ENCODE measurements at regions of chr7 and their contacts with region 1.

Region 1: GRCh38 chr7:91880413-91881241 is at the start of gene MTERF1:
- DNase-seq: peak; percentile 93
- H3K4me3 ChIP-seq: peak within 1 kb of the TSS; percentile 72 to 90
- H3K27ac ChIP-seq: peak within 1 kb of the TSS; percentile 61 to 78
- H3K4me1 ChIP-seq: peaks cover 8 to 9% of the 10 kb centered on the region in 2 experiments
- H3K27me3 ChIP-seq: no peaks in the 10 kb centered on the region
- CTCF ChIP-seq: peak; percentile 100
- EP300 ChIP-seq: no peak
- RAD21 ChIP-seq: peak; percentile 91
- polyA plus RNA-seq, gene MTERF1: 6.1 and 12.0 TPM in 2 replicates

Region 2: DNA sequence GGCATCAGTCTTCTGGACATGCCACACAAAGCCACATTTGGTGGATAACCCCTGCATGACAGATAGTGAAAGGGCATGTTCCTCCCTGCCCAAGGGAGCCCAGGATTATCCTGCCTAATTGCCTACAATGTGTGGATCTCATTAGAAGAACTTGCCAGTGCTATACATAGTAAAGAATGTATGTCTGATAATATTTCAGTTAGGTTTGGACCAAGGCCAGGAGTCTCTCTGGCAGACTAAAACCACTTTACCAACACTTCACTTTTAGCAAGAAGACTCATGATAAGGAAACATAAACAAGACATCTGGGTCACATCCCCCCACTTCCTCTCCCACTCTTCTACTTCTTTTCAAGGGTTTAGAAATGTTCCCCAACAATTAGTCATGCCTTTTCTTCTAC is 196.8 kb before region 1 on chr7:
- CTCF ChIA-PET with region 1: no interaction called
- POLR2A ChIA-PET with region 1: no interaction called
- DNase-seq: peak; percentile 16
- H3K4me3 ChIP-seq: no peak overlapping the region
- H3K27ac ChIP-seq: no peak overlapping the region
- H3K4me1 ChIP-seq: peaks cover 0 to 3% of the 10 kb centered on the region in 2 experiments; a peak in 1 of 4 replicates
- H3K27me3 ChIP-seq: no peaks in the 10 kb centered on the region
- CTCF ChIP-seq: no peak
- EP300 ChIP-seq: no peak
- RAD21 ChIP-seq: no peak

Region 3: GRCh38 chr7:91771921-91772815 is 108.5 kb before region 1 on chr7:
- CTCF ChIA-PET with region 1: no interaction called
- POLR2A ChIA-PET with region 1: no interaction called
- DNase-seq: no peak
- H3K4me3 ChIP-seq: no peak overlapping the region
- H3K27ac ChIP-seq: no peak overlapping the region
- H3K4me1 ChIP-seq: no peaks in the 10 kb centered on the region
- H3K27me3 ChIP-seq: no peaks in the 10 kb centered on the region
- CTCF ChIP-seq: no peak
- EP300 ChIP-seq: no peak
- RAD21 ChIP-seq: no peak

Region 4: DNA sequence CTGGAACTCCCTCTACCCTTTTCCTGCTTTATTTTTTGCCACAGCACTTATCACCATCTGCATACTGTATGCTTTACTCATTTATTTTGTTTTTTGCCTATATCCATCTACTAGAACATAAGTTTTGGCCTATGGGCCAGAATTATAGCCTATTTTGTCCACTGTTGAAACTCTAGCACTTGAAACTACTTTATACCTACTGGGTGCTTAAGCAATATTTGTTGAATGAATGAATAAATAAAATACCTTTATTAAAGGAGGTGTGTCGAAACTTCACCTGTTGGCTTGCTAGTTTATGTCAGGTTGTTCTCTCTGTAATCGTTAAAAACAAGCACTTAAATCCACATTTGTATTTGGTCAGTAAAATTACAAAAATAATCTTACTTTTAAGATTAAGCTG is 53.5 kb before region 1 on chr7:
- CTCF ChIA-PET with region 1: interaction called, 31 read pairs
- POLR2A ChIA-PET with region 1: interaction called, 3 read pairs
- DNase-seq: no peak
- H3K4me3 ChIP-seq: no peak overlapping the region
- H3K27ac ChIP-seq: no peak overlapping the region
- H3K4me1 ChIP-seq: peaks cover 0 to 3% of the 10 kb centered on the region in 2 experiments; a peak in 1 of 4 replicates
- H3K27me3 ChIP-seq: no peaks in the 10 kb centered on the region
- CTCF ChIP-seq: no peak
- EP300 ChIP-seq: no peak
- RAD21 ChIP-seq: no peak

Region 5: DNA sequence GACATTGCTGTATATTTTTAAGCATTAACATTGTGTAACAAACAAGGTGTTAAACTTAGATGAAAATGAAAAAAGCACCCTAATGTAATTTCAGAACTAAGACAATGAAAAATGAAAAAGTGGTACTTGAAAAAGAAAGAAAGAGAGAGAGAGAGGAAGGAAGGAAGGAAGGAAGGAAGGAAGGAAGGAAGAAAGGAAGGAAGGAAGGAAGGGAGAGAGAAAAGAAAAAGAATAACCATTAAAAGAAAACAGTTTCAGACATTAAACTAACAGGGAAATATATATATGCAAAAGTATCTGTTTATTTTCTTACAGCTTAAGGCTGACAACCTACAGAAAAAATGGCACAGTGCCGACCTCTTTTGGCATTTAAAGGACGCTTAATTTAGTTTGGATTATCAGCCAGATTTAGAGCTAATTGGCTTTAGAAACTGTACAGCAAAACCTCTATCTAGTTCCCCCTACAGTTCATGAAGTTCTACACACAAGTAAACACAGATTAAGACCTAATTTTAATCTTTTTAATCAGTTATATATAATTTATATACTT is 14.0 kb before region 1 on chr7:
- CTCF ChIA-PET with region 1: interaction called, 16 read pairs
- POLR2A ChIA-PET with region 1: interaction called, 3 read pairs
- DNase-seq: no peak
- H3K4me3 ChIP-seq: no peak overlapping the region
- H3K27ac ChIP-seq: no peak overlapping the region
- H3K4me1 ChIP-seq: no peaks in the 10 kb centered on the region; a peak in 3 of 4 replicates
- H3K27me3 ChIP-seq: no peaks in the 10 kb centered on the region
- CTCF ChIP-seq: no peak
- EP300 ChIP-seq: no peak
- RAD21 ChIP-seq: peak; percentile 13; the same call in 1 of the 2 replicates

Region 6: GRCh38 chr7:91940572-91941341 is 60.1 kb after region 1 on chr7 and contains the start of gene AKAP9:
- CTCF ChIA-PET with region 1: interaction called, 34 read pairs
- POLR2A ChIA-PET with region 1: interaction called, 3 read pairs
- DNase-seq: peak; percentile 93
- H3K4me3 ChIP-seq: peak within 1 kb of the TSS; percentile 77 to 95
- H3K27ac ChIP-seq: peak within 1 kb of the TSS; percentile 89 to 95
- H3K4me1 ChIP-seq: peaks cover 8 to 9% of the 10 kb centered on the region in 2 experiments; a peak in 3 of 4 replicates
- H3K27me3 ChIP-seq: no peaks in the 10 kb centered on the region
- CTCF ChIP-seq: no peak
- EP300 ChIP-seq: no peak
- RAD21 ChIP-seq: no peak
- polyA plus RNA-seq, gene AKAP9: 13.1 and 16.7 TPM in 2 replicates

Region 7: GRCh38 chr7:92020636-92021035 is 140.0 kb after region 1 on chr7:
- CTCF ChIA-PET with region 1: no interaction called
- POLR2A ChIA-PET with region 1: no interaction called
- DNase-seq: no peak
- H3K4me3 ChIP-seq: no peak overlapping the region
- H3K27ac ChIP-seq: no peak overlapping the region; a peak in 1 of 4 replicates
- H3K4me1 ChIP-seq: peaks cover 0 to 11% of the 10 kb centered on the region in 2 experiments; a peak in 1 of 4 replicates
- H3K27me3 ChIP-seq: no peaks in the 10 kb centered on the region
- CTCF ChIP-seq: no peak
- EP300 ChIP-seq: no peak
- RAD21 ChIP-seq: no peak

Region 8: DNA sequence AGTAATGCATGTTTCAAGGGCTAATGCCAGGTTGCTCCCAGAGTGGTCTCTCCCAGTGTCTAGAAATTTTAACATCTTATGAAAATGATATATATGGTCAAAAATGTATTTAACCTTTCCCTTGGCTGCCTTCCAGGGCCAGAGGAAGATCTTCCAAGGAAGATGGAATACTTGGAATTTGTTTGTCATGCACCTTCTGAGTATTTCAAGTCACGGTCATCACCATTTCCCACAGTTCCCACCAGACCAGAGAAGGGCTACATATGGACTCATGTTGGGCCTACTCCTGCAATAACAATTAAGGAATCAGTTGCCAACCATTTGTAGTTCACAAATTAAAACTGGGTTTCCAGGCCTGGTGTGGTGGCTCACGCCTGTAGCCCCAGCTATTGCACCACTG is 575.6 kb after region 1 on chr7:
- CTCF ChIA-PET with region 1: interaction called, 10 read pairs
- POLR2A ChIA-PET with region 1: no interaction called
- DNase-seq: no peak
- H3K4me3 ChIP-seq: no peak overlapping the region
- H3K27ac ChIP-seq: peak overlapping the region in 1 of 2 experiments; percentile 35; a peak in 1 of 4 replicates
- H3K4me1 ChIP-seq: peaks cover 0 to 2% of the 10 kb centered on the region in 2 experiments; a peak in 3 of 4 replicates
- H3K27me3 ChIP-seq: no peaks in the 10 kb centered on the region
- CTCF ChIP-seq: no peak
- EP300 ChIP-seq: no peak
- RAD21 ChIP-seq: no peak

Region 9: DNA sequence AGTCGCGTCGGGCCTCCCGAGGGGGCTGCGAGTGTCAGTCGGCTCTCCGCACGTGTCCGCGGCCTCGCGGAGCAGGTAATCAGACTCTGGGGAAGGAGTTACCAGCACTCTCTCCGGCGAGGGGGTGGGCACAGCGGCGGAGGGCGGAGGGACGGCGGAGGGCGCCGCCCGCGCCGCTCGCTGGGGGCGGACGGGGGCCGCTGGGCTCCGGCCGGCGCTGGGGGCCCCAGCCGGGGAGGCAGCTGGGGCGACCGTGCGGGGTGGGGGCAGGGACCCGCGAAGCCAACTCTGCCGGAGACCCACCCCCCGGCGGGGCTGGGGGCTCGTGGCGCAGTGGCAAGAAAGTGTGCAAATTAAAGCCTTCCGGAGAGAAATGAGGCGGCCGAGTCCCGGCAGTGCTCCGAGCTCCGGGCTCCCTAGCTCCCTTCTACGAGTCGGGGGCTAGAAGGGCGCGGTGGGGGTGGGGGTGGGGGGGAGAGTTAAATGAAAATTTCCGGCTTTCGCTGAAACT is 955.9 kb after region 1 on chr7 and contains the start of gene CDK6:
- CTCF ChIA-PET with region 1: no interaction called
- POLR2A ChIA-PET with region 1: no interaction called
- DNase-seq: peak; percentile 79
- H3K4me3 ChIP-seq: peak within 1 kb of the TSS; percentile 80 to 88
- H3K27ac ChIP-seq: peak within 1 kb of the TSS; percentile 95 to 96
- H3K4me1 ChIP-seq: peaks cover 3 to 19% of the 10 kb centered on the region in 2 experiments; a peak in 2 of 4 replicates
- H3K27me3 ChIP-seq: no peaks in the 10 kb centered on the region
- CTCF ChIP-seq: no peak
- EP300 ChIP-seq: no peak
- RAD21 ChIP-seq: no peak
- polyA plus RNA-seq, gene CDK6: 30.3 and 33.2 TPM in 2 replicates

Measured in SK-N-SH (cell line).